Esophagus muscularis mucosa (tissue), 4 donors: ENCODE measurements at regions of chr19 and their contacts with region 1.

Region 1: DNA sequence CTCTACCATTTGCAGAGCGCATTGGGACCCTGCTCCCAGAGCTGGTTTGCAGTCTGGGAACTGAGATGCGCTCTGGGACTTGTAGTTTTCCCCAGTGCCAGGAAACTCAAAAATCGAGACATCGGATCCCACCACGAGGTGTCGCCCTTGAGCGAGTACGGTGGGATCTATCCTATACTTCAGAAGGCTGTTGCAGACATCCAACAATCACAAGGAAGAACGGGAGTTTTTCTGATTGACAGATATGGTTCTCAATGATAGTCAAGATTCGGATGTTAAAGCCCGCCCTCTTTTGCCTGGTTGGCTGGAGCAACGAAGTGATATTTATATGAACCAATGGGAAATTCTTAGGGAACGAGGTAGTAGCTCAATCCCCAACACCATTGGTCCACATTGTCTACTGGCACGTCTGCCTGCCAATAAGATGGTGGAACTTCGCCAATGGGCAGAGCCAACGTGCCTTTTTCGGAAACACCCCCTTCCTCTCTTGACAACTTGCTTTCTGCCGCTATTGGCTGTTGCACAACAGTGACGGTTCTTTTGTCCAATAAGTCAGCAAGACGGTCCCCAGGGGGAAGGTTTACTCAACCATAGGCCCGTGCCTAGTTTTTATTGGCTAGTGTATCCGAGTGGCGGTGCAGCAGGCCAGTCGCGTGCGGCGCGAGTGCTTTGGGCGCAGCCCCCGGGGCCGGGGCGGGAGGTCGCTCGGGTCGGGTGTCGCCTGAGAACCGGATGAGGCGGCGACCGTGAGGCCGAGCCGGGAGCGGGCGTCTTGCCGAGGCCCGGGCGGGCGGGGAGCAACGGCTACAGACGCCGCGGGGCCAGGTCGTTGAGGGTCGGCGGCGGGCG is at the start of gene DNM2:
- DNase-seq: peak; percentile 100
- H3K4me3 ChIP-seq: peak within 1 kb of the TSS; percentile 80 to 97 (median 88)
- H3K27ac ChIP-seq: peak within 1 kb of the TSS; percentile 86 to 94 (median 92)
- H3K4me1 ChIP-seq: peaks cover 26 to 49% (median 40%) of the 10 kb centered on the region in 4 donors
- H3K27me3 ChIP-seq: no peaks in the 10 kb centered on the region
- CTCF ChIP-seq: peak; percentile 80 to 89 (median 86)
- EP300 ChIP-seq: no peak
- POLR2A ChIP-seq: peak; percentile 73
- total RNA-seq, gene DNM2: 73.6 to 115 (median 93.7) TPM

Region 2: GRCh38 chr19:10769533-10770491 is 52.2 kb after region 1 on chr19:
- intact Hi-C with region 1: loop called (anchors 5 kb)
- DNase-seq: no peak
- H3K4me3 ChIP-seq: no peak overlapping the region
- H3K27ac ChIP-seq: peak overlapping the region; percentile 30 to 65 (median 46)
- H3K4me1 ChIP-seq: peaks cover 53 to 59% (median 55%) of the 10 kb centered on the region in 4 donors
- H3K27me3 ChIP-seq: no peaks in the 10 kb centered on the region
- CTCF ChIP-seq: peak in 2 of 3 experiments; percentile 26 to 32
- EP300 ChIP-seq: no peak
- POLR2A ChIP-seq: no peak

Region 3: GRCh38 chr19:10789866-10790265 is 72.3 kb after region 1 on chr19:
- intact Hi-C with region 1: no loop called
- DNase-seq: no peak
- H3K4me3 ChIP-seq: no peak overlapping the region
- H3K27ac ChIP-seq: no peak overlapping the region
- H3K4me1 ChIP-seq: no peaks in the 10 kb centered on the region
- H3K27me3 ChIP-seq: no peaks in the 10 kb centered on the region
- CTCF ChIP-seq: no peak
- EP300 ChIP-seq: no peak
- POLR2A ChIP-seq: no peak

Region 4: DNA sequence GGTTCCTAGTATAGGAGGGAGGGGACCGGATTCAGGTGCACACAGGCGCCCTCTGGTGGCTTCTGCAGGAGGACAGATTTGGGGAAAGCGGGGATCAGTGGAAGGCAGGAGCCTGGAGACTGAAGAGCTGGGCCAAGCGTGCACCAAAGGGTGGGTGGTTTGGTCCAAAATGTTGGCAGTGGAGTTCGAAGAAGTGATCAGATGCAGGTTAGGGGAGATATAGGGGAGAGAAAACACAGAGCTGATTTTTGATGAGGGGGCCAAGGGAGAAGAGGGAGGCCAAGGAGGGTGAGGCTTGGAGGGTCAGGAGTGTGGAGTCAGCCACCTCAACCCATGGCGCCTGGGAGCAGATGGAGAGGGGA is 146.9 kb after region 1 on chr19:
- intact Hi-C with region 1: loop called (anchors 5 kb)
- DNase-seq: no peak
- H3K4me3 ChIP-seq: peak overlapping the region in 3 of 4 donors; percentile 7 to 13 (median 8)
- H3K27ac ChIP-seq: peak overlapping the region in 1 of 4 donors; percentile 48
- H3K4me1 ChIP-seq: peaks cover 0 to 11% (median 6%) of the 10 kb centered on the region in 4 donors
- H3K27me3 ChIP-seq: no peaks in the 10 kb centered on the region
- CTCF ChIP-seq: peak; percentile 76 to 90 (median 86)
- EP300 ChIP-seq: no peak
- POLR2A ChIP-seq: no peak